Activated CD8-positive, alpha-beta memory T cell treated with anti-CD3 and anti-CD28 coated beads, Interleukin-2, amount 10 ng/mL, durations not matched to agents 7 days and 5 days (primary cell): ENCODE measurements at regions of chr3 and their contacts with region 1.

Region 1: DNA sequence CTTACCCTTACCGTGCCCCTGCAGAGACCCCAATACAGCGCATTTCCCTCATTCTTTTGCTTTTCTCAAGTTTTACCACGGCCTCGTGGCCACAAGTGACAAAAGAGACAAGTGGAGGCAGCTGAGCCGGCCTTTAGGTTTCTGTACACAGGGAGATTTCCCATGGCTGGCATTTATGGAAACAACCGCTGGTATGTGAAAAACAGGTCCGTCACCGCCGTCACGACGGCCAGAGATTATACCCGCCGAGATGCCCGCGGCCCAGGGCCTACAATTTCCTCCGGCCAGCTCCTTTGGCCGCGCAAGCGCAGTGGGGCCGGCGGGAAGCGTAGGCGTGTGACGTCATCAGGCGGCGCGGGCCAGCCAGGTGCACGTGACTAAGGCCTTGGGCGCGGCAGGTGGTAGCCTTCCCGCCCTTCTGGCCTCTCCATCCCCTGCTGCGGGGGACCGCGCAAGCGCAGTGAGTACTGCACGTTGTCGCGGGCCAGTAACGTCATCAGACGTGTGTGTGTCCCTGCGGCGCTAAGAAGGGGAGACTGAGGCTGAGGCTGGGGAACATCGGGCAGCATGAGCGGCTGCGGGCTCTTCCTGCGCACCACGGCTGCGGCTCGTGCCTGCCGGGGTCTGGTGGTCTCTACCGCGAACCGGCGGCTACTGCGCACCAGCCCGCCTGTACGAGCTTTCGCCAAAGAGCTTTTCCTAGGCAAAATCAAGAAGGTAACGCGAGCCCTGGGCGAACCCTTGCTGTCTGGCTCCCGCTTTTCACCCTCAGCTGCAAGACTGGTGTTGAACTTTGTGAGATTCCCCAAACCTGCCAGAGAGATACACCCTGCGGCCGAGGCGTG is at the start of gene ACAD9:
- DNase-seq: peak; percentile 98
- ATAC-seq: peak; percentile 97
- H3K4me3 Mint-ChIP-seq: peak within 1 kb of the TSS; percentile 86
- H3K27ac Mint-ChIP-seq: peak within 1 kb of the TSS; percentile 95
- H3K4me1 Mint-ChIP-seq: peaks cover 64% of the 10 kb centered on the region
- H3K27me3 Mint-ChIP-seq: peaks cover 3% of the 10 kb centered on the region
- total RNA-seq, gene ACAD9: 61.2 to 68.2 TPM

Region 2: DNA sequence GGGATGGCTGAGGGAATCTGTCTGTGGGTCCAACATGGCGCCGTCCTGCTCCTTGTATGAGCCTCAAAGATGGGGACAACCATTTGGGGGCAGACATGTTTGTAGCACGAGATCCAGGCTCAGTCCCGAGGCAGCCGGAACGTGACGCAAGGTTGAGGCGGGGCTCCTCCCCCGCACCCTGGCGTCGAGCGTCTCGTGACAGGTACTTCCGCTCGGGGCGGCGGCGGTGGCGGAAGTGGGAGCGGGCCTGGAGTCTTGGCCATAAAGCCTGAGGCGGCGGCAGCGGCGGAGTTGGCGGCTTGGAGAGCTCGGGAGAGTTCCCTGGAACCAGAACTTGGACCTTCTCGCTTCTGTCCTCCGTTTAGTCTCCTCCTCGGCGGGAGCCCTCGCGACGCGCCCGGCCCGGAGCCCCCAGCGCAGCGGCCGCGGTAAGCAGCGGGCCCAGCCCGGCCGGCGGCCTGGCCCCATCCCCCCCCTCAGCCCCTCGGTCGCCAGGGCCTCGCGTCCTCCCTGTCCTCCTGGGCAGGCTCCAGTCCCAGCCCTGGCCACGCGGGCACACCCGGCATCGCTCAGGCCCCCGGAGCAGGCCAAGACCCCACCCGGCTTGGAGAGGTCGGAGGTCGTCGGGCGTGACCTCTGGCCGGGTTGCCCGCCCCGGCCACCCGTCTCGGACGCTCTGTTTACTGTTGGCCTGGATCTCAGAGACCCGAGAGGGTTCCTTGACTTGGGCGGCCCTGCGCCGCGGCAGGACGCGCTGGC is 153.2 kb before region 1 on chr3 and contains the start of gene RAB7A:
- CTCF ChIA-PET with region 1: no interaction called
- DNase-seq: peak; percentile 98
- ATAC-seq: peak; percentile 96
- H3K4me3 Mint-ChIP-seq: peak within 1 kb of the TSS; percentile 82
- H3K27ac Mint-ChIP-seq: peak within 1 kb of the TSS; percentile 87
- H3K4me1 Mint-ChIP-seq: peaks cover 46% of the 10 kb centered on the region
- H3K27me3 Mint-ChIP-seq: peaks cover 5% of the 10 kb centered on the region
- total RNA-seq, gene RAB7A: 184 to 238 TPM

Region 3: GRCh38 chr3:128845778-128846485 is 33.4 kb before region 1 on chr3:
- CTCF ChIA-PET with region 1: interaction called, 11 read pairs
- DNase-seq: peak; percentile 91
- ATAC-seq: peak; percentile 81
- H3K4me3 Mint-ChIP-seq: peak overlapping the region; percentile 59
- H3K27ac Mint-ChIP-seq: peak overlapping the region; percentile 80
- H3K4me1 Mint-ChIP-seq: peaks cover 13% of the 10 kb centered on the region
- H3K27me3 Mint-ChIP-seq: no peaks in the 10 kb centered on the region

Region 4: DNA sequence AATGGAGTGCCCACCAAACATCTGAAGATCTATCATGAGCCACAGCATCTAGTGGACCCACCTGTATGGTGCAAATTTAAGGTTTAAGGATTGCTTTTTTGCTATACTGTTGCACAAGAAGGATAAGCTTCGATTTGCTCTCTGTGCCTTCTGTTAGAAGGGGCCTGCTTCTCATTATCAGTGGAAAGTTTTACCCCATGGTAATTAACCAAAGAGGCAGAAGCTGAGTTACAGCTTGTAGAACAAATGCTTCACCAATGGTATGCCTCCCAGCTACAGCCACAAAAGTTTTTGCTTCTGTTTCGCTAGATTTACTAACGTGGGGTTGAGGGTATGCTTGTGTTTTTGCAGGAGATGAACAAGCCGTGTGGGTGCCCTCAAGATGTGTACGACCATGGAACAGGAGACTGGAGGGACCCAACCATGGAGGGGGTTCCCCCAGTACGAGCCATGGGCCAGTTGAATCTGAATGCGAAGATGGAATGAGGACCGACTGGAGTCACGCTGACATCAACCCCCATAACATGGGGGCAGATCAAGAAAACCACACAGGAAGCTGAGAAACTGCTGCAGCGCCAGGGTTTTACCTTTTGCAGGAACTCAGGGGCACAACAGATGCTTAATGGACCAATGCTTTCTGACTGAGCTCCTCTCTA is 43.6 kb after region 1 on chr3:
- CTCF ChIA-PET with region 1: interaction called, 40 read pairs
- DNase-seq: peak; percentile 80
- ATAC-seq: peak; percentile 73
- H3K4me3 Mint-ChIP-seq: peak overlapping the region; percentile 59
- H3K27ac Mint-ChIP-seq: peak overlapping the region; percentile 64
- H3K4me1 Mint-ChIP-seq: peaks cover 23% of the 10 kb centered on the region
- H3K27me3 Mint-ChIP-seq: peaks cover 3% of the 10 kb centered on the region

Region 5: GRCh38 chr3:128993461-128994173 is 114.3 kb after region 1 on chr3 and contains the start of gene CFAP92:
- CTCF ChIA-PET with region 1: no interaction called
- DNase-seq: peak; percentile 94
- ATAC-seq: peak; percentile 100
- H3K4me3 Mint-ChIP-seq: peak within 1 kb of the TSS; percentile 40
- H3K27ac Mint-ChIP-seq: peak within 1 kb of the TSS; percentile 44
- H3K4me1 Mint-ChIP-seq: peaks cover 14% of the 10 kb centered on the region
- H3K27me3 Mint-ChIP-seq: peaks cover 18% of the 10 kb centered on the region
- total RNA-seq, gene CFAP92: 0.12 TPM in 1 of 2 experiments, not detected in the other